SK-N-SH (cell line): ENCODE measurements at regions of chr1 and their contacts with region 1.

Region 1: GRCh38 chr1:243343970-243344937 is 88.4 kb downstream of the SDCCAG8 start:
- DNase-seq: peak; percentile 59
- H3K4me3 ChIP-seq: no peak overlapping the region; a peak in 1 of 4 replicates
- H3K27ac ChIP-seq: no peak overlapping the region; a peak in 2 of 4 replicates
- H3K4me1 ChIP-seq: peaks cover 0 to 10% of the 10 kb centered on the region in 2 experiments; a peak in 1 of 4 replicates
- H3K27me3 ChIP-seq: no peaks in the 10 kb centered on the region
- CTCF ChIP-seq: peak; percentile 90
- EP300 ChIP-seq: no peak
- RAD21 ChIP-seq: peak; percentile 89

Region 2: DNA sequence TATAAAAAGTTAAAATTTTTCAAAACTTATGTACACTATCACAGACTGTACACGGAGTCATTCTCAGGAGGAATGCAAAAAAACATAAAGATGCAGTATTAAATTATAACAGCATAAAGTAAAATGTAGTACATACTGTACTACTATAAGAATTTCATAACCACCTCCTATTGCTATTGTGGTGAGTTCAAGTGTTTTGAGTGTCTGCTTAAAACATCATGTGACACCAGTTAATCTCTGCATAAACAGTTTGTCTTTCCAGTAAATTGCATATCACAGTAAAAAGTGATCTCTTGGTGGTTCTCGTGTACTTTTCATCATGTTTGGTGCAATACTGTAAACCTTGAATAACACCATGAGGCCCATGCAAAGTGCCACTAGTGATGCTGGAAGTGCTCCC is 43.2 kb before region 1 on chr1:
- CTCF ChIA-PET with region 1: no interaction called
- POLR2A ChIA-PET with region 1: no interaction called
- DNase-seq: no peak
- H3K4me3 ChIP-seq: no peak overlapping the region
- H3K27ac ChIP-seq: no peak overlapping the region
- H3K4me1 ChIP-seq: no peaks in the 10 kb centered on the region
- H3K27me3 ChIP-seq: no peaks in the 10 kb centered on the region
- CTCF ChIP-seq: no peak
- EP300 ChIP-seq: no peak
- RAD21 ChIP-seq: no peak

Region 3: DNA sequence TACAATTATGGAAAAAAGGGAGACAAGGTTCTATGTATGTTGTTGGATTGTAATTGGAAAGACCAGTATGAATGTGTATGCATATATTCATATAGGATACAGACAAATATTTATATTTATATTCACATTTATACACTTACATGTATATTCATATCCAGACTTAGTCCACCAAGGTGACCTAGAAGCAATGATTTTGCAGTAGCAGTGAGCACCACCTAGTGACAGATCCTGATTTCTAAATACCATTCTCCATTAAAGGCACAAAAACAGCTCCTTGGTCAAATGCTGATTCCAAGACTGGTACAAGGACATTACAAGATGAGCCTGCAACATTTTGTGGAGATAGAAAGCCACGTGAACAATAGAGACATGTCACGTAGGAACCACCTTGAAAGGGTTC is 65.0 kb after region 1 on chr1:
- CTCF ChIA-PET with region 1: interaction called, 10 read pairs
- POLR2A ChIA-PET with region 1: no interaction called
- DNase-seq: no peak
- H3K4me3 ChIP-seq: no peak overlapping the region
- H3K27ac ChIP-seq: no peak overlapping the region
- H3K4me1 ChIP-seq: peaks cover 0 to 12% of the 10 kb centered on the region in 2 experiments; a peak in 3 of 4 replicates
- H3K27me3 ChIP-seq: no peaks in the 10 kb centered on the region
- CTCF ChIP-seq: peak; percentile 35; the same call in 1 of the 2 replicates
- EP300 ChIP-seq: no peak
- RAD21 ChIP-seq: peak; percentile 44

Region 4: DNA sequence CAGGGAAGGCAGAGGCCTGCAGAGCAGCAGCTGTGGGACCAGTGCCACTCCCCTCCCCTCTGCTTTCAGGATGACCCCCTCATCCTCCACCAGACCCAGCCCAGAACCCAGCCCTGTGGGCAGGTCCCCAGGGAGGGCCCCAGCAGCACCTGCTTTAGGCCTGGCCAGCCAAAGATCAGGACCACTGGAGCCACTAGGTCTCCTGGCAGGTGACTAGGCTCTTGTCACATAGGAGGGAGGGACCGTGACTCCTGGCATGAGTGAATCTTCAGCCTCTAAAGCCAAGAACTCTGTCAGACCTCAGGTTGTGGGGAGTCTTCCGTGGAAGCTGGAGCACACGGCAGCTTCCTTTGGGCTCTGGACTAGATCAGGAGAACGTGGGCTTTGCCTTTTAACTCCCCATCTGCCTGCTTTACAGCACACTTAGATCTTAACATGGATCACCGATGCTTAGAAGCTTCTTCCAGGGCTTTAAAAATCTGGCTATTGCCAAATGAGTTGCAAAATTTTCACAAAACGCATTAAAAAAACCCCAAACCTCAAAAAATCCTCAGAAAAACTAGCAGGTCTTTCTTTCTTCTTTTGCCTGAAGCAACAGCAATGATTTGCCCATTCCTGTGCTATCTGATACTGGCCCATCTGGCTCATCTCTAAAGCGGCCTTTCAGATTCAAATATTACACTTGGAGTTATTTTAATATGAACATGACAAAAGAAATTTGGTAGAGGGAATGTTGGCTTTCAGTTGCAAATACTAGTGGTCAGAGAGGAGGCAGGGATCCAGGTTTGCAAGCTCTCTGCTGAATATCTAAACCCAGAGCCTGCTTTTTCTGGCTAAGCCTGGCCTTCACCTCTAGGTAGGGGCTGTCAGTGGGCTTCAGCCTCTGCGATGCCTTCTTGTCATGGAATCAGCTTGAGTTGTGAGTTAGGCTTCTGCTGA is 146.8 kb after region 1 on chr1:
- CTCF ChIA-PET with region 1: interaction called, 10 read pairs
- POLR2A ChIA-PET with region 1: no interaction called
- DNase-seq: no peak
- H3K4me3 ChIP-seq: no peak overlapping the region
- H3K27ac ChIP-seq: peak overlapping the region; percentile 27 to 73; a peak in 3 of 4 replicates
- H3K4me1 ChIP-seq: peaks cover 7 to 31% of the 10 kb centered on the region in 2 experiments; a peak in 1 of 4 replicates
- H3K27me3 ChIP-seq: no peaks in the 10 kb centered on the region
- CTCF ChIP-seq: no peak
- EP300 ChIP-seq: 0 out of 4 replicates have a peak, but pooled peaks of 1 of the 2 experiments have one; percentile 8
- RAD21 ChIP-seq: no peak

Region 5: GRCh38 chr1:243748706-243749283 is 404.5 kb after region 1 on chr1:
- CTCF ChIA-PET with region 1: interaction called, 18 read pairs
- POLR2A ChIA-PET with region 1: no interaction called
- DNase-seq: peak; percentile 77
- H3K4me3 ChIP-seq: no peak overlapping the region
- H3K27ac ChIP-seq: no peak overlapping the region; a peak in 1 of 4 replicates
- H3K4me1 ChIP-seq: peaks cover 0 to 9% of the 10 kb centered on the region in 2 experiments; a peak in 2 of 4 replicates
- H3K27me3 ChIP-seq: no peaks in the 10 kb centered on the region
- CTCF ChIP-seq: peak; percentile 82
- EP300 ChIP-seq: no peak
- RAD21 ChIP-seq: peak; percentile 90

Region 6: GRCh38 chr1:244272471-244273261 is 928.4 kb after region 1 on chr1:
- CTCF ChIA-PET with region 1: interaction called, 33 read pairs
- POLR2A ChIA-PET with region 1: no interaction called
- DNase-seq: peak; percentile 76
- H3K4me3 ChIP-seq: peak overlapping the region in 1 of 2 experiments; percentile 58; a peak in 1 of 4 replicates
- H3K27ac ChIP-seq: peak overlapping the region; percentile 70 to 87
- H3K4me1 ChIP-seq: peaks cover 9 to 12% of the 10 kb centered on the region in 2 experiments
- H3K27me3 ChIP-seq: no peaks in the 10 kb centered on the region
- CTCF ChIP-seq: peak; percentile 100
- EP300 ChIP-seq: no peak
- RAD21 ChIP-seq: peak; percentile 100

Region 7: DNA sequence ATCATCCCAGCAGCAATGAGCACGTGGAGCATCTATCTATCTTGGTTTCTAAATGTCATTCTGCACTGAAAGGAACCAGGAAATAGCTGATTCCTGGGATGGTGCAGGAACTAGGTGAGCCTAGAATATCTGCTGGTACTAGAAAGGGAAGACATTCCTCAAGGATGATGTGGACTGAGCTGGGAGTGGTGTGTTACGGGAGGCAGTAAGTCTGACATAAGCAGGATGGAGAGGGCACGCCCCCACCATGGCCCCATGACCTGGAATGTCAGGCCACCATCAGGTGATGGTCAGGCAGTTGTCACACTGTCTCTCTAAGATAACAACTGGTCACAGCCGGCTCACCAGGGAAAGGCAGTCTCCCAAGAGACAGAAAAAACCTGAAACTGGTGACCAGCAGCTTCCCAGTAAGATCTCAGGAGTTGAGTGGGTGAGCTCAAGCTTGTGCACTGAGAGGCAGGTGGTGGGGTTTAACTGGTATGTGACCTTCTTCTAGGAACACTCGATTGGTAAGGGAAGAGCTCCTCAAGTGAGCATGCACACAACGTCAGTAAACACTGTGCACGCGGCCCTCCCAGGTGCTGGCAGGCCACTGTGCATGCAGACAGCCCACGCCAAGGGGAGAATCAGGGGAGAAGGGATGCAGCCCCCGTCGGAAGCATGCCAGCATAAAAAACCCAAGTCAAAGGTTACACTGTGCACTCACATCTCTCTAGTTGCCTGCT is 958.8 kb after region 1 on chr1:
- CTCF ChIA-PET with region 1: interaction called, 15 read pairs
- POLR2A ChIA-PET with region 1: no interaction called
- DNase-seq: no peak
- H3K4me3 ChIP-seq: no peak overlapping the region
- H3K27ac ChIP-seq: no peak overlapping the region
- H3K4me1 ChIP-seq: peaks cover 0 to 4% of the 10 kb centered on the region in 2 experiments; a peak in 1 of 4 replicates
- H3K27me3 ChIP-seq: no peaks in the 10 kb centered on the region
- CTCF ChIP-seq: no peak
- EP300 ChIP-seq: no peak
- RAD21 ChIP-seq: no peak